ENCODE measurements at regions of chr6 and their contacts with region 1.

Region 1: DNA sequence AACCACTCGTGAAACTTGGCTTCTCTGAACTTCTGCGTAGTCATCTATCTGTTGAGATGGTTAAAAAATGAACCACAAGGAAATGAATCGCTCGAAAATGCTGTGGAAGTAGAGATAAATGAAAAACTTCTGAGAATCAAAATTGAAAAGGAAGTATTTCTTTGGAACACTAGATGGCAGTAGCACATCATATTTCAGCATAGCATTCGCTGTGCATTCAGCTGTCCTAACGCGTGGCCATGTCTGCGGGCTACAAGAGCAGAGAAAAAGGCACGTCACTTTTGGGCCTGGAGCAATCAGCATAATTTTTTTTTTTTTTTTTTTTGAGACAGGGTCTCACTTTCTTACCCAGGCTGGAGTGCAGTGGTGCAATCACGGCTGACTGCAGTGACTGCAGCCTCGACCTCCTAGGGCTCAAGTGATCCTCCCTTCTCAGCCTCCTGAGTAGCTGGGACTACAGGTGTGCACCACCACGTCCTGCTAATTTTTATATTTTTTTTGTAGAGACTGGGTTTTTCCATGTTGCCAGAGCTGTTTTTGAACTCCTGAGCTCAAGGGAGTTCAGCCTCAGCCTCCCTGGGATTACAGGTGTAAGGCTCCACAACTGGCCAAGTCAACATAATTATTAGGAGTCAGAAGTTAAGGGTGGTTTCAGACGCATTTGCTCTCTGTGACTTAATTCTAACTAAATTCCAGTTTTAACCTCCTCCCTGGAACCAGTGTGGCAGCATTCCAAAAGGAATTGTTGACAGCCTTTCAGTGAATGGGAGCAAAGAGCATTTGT is 8.8 kb upstream of the PERP start:
- DNase-seq: peak; percentile 39 to 83 (median 65)
- H3K4me3 ChIP-seq: no peak overlapping the region
- H3K27ac ChIP-seq: no peak overlapping the region
- H3K4me1 ChIP-seq: no peaks in the 10 kb centered on the region
- H3K27me3 ChIP-seq: no peaks in the 10 kb centered on the region
- CTCF ChIP-seq: peak; percentile 59 to 92 (median 82)
- POLR2A ChIP-seq: no peak

Region 2: GRCh38 chr6:138001750-138002349 is 114.2 kb before region 1 on chr6:
- intact Hi-C with region 1: no loop called
- DNase-seq: peak; percentile 31 to 83 (median 56)
- H3K4me3 ChIP-seq: no peak overlapping the region
- H3K27ac ChIP-seq: no peak overlapping the region
- H3K4me1 ChIP-seq: no peaks in the 10 kb centered on the region
- H3K27me3 ChIP-seq: no peaks in the 10 kb centered on the region
- CTCF ChIP-seq: peak; percentile 64 to 85 (median 79)
- POLR2A ChIP-seq: no peak

Region 3: GRCh38 chr6:138250513-138251247 is 134.6 kb after region 1 on chr6:
- intact Hi-C with region 1: no loop called
- DNase-seq: peak; percentile 77 to 95 (median 87)
- H3K4me3 ChIP-seq: peak overlapping the region in 1 of 4 donors; percentile 29
- H3K27ac ChIP-seq: peak overlapping the region in 2 of 5 donors; percentile 52 to 83
- H3K4me1 ChIP-seq: peaks cover 0 to 11% of the 10 kb centered on the region in 2 donors
- H3K27me3 ChIP-seq: no peaks in the 10 kb centered on the region
- CTCF ChIP-seq: no peak
- POLR2A ChIP-seq: no peak

Region 4: DNA sequence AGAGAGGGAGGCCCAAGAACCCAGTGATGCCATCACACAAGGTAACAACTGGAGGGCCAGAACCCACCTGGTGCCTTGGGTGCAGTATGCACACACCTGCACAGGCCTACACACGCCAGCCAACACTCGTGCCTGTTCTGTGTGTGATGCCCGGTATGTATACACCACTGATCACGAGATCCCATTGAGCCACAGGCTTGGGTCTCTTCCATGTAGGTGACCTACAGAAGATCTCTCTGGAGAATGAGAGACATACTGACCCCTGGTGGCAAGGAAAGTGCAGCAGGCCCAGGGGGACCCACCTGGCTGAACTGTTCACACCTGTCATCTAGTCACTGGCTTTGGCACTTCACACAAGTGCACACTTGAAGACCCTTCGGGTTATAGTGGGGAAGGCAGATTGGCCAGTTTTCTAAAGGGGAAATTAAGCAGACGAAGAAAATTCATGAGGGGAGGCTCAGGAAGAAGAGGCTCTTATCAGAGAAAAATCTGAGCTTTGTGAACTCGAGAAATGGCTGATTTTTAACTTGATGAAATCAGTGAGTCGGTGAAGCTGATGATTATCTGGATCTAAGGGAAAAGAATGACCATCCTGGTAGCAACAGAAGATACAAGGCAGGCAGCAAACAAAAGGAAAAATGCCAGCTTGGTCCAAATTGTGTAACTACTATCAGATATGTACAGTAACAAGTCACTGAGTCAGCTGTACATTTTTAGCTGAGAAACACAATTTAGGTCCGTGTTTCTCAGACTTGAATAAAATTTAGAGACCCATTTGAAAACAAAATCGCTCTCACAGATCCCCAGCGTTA is 171.3 kb after region 1 on chr6:
- intact Hi-C with region 1: loop called (anchors 5 to 10 kb)
- DNase-seq: peak; percentile 33 to 77 (median 55)
- H3K4me3 ChIP-seq: no peak overlapping the region
- H3K27ac ChIP-seq: no peak overlapping the region
- H3K4me1 ChIP-seq: no peaks in the 10 kb centered on the region
- H3K27me3 ChIP-seq: no peaks in the 10 kb centered on the region
- CTCF ChIP-seq: peak; percentile 34 to 62 (median 56)
- POLR2A ChIP-seq: no peak

Region 5: DNA sequence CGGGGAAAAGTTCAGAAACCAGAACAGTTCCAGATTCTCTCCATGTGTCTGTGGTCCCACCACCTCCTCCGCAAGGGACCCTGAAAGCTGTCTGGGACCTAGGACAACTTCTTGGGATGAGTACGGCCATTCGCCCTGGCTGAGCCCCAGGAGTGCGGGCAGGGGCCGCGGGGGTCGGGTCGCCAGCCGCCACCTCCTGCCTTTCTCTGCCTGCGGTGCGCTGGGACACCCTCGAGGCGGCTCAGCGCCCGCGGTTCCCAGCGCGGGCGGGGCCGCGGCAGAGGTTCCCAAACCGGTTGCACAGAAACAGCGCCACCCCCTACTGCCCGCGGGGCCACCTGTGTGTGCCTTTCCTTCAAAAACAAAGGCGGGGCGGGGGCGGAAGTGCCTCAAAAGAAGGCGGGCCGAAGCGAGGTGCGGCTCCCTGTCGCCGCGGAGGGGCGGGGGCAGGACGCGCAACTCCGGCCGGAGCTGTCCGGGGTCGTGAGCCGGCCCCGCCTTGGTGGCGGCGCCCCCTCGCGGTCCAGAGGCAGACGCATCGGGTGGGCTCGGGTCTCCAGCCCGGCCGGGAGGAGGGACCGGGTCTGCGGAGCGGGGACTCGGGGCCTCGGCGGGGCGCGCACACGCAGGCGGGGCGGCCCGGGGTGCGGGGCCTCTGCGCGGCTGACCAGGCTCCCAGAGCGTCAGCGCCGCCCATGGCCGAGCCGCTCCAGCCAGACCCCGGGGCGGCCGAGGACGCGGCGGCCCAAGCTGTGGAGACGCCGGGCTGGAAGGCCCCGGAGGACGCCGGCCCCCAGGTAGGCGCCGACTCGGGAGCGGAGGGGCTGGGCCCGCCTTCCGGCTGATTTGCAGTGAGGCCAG is 288.0 kb after region 1 on chr6 and contains the start of gene HEBP2:
- intact Hi-C with region 1: loop called in 1 of 2 experiments (anchors 10 kb)
- DNase-seq: peak; percentile 94 to 98 (median 96)
- H3K4me3 ChIP-seq: peak within 1 kb of the TSS; percentile 60 to 97 (median 84)
- H3K27ac ChIP-seq: peak within 1 kb of the TSS; percentile 24 to 95 (median 85)
- H3K4me1 ChIP-seq: peaks cover 0 to 10% of the 10 kb centered on the region in 2 donors
- H3K27me3 ChIP-seq: no peaks in the 10 kb centered on the region
- CTCF ChIP-seq: peak in 5 of 6 experiments; percentile 17 to 58 (median 50)
- POLR2A ChIP-seq: peak; percentile 69 to 80
- total RNA-seq, gene HEBP2: 22.3 to 76.9 (median 50.1) TPM

Region 6: GRCh38 chr6:138509371-138509770 is 393.3 kb after region 1 on chr6:
- intact Hi-C with region 1: loop called in 1 of 2 experiments (anchors 10 kb)
- DNase-seq: peak in 6 of 7 donors; percentile 33 to 70 (median 44)
- H3K4me3 ChIP-seq: no peak overlapping the region
- H3K27ac ChIP-seq: no peak overlapping the region
- H3K4me1 ChIP-seq: no peaks in the 10 kb centered on the region
- H3K27me3 ChIP-seq: no peaks in the 10 kb centered on the region
- CTCF ChIP-seq: peak; percentile 26 to 63 (median 50)
- POLR2A ChIP-seq: no peak

Region 7: DNA sequence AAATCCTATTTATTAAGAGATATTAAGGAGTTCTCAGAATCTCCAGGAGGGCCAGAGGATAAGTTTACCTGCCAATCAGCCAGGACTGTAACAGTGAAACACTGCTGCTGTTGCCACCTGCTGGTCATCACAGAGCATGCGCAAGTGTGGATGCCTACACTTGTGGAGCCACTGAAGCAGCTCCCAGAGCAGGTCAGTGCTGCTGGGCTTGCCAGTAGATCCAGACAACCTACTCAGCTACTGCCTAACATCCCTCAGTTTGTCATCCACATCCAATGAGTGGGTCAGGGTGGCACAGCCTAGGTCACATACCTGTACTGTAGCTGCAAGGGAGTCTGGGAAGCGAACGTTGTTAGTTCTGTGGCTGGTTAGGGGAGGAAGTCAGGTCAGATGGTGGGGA is 401.6 kb after region 1 on chr6:
- intact Hi-C with region 1: loop called in 1 of 2 experiments (anchors 5 kb)
- DNase-seq: peak in 6 of 7 donors; percentile 22 to 55 (median 36)
- H3K4me3 ChIP-seq: no peak overlapping the region
- H3K27ac ChIP-seq: no peak overlapping the region
- H3K4me1 ChIP-seq: no peaks in the 10 kb centered on the region
- H3K27me3 ChIP-seq: no peaks in the 10 kb centered on the region
- CTCF ChIP-seq: peak; percentile 22 to 54 (median 40)
- POLR2A ChIP-seq: no peak

Region 8: DNA sequence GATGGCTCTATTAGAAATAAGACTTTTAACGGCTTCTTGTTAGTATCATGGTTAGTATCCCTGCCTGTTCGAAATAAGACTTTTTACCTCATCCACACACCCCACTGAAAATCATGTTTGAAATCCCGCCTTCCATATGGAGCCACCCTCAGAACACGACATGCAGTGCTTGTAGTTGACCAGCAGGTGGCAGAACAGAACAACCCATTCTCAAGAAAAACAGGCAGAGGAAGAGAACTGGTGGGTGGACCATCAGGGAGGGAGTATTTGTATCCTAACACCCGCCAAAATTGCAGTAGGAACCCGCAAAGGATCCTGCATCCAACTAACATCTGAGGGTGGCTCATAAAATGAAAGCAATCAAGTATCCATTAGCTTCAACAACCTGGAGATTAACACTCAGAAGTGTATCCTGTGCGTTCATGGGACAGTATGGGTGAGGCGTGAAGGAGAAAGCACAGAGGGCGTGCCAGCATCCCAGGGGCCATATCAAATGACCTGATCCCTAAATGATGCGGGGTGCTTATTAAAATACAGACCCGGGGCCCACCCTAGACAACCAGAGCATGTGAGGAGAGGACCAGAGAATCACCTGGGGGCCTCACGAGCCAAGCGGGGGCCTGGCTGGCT is 472.9 kb after region 1 on chr6:
- intact Hi-C with region 1: loop called in 1 of 2 experiments (anchors 10 kb)
- DNase-seq: peak; percentile 49 to 76 (median 58)
- H3K4me3 ChIP-seq: no peak overlapping the region
- H3K27ac ChIP-seq: no peak overlapping the region
- H3K4me1 ChIP-seq: peaks cover 5 to 23% of the 10 kb centered on the region in 2 donors
- H3K27me3 ChIP-seq: no peaks in the 10 kb centered on the region
- CTCF ChIP-seq: peak; percentile 85 to 95 (median 90)
- POLR2A ChIP-seq: no peak

Region 9: GRCh38 chr6:138765896-138766655 is 650.0 kb after region 1 on chr6:
- intact Hi-C with region 1: loop called in 1 of 2 experiments (anchors 10 kb)
- DNase-seq: peak in 1 of 7 donors; percentile 7
- H3K4me3 ChIP-seq: no peak overlapping the region
- H3K27ac ChIP-seq: no peak overlapping the region
- H3K4me1 ChIP-seq: peaks cover 0 to 5% of the 10 kb centered on the region in 2 donors
- H3K27me3 ChIP-seq: no peaks in the 10 kb centered on the region
- CTCF ChIP-seq: peak; percentile 39 to 83 (median 72)
- POLR2A ChIP-seq: no peak